ENCODE measurements at regions of chr7 and their contacts with region 1.

Region 1: DNA sequence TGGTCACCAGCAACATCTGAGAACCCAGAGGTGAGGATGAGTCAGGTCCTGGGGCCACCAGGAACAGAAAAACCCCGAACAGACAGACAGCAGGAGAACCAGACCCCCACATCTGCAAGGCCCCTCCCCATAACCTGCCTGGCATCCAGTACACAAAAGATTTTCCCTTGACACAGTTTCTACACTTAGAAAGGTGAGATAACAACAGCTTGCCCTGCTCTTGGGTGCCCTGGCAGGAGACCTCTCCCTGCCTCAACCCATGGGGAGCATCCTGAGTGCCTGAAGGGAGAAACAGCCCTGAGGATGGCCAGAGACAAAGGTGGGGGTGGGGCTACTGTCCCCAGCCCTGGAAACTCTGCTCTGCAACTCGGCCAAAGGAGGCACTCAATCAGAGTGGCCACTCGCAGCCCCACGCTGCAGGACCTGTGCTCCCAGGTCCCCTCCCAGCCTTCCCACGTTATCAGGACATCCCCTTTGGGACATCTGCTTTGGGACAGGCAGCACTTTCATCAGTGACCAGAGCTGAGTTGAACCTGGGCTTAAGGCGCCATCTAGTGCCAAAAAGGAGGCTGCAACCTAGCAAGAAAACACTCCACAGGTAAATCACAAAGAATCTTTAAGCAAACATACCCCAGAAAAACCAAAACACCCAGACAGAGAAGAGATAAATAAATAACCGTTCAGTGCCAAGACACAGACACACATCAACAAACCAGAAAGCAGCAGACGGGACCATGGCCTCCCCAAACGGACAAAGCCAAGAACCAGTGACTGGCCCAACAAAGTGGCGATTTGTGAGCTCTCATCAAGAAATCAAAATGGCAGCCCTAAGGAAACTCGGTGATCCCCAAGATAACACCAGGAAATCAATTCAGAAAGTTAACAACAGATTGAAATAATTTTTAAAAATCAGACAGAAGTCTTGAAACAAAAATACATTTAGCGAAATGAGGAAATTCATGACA is 233.7 kb downstream of the PTPRN2 start:
- DNase-seq: peak; percentile 42
- H3K4me3 ChIP-seq: no peak overlapping the region
- H3K27ac ChIP-seq: no peak overlapping the region
- H3K4me1 ChIP-seq: no peaks in the 10 kb centered on the region
- H3K27me3 ChIP-seq: peaks cover 6% of the 10 kb centered on the region
- CTCF ChIP-seq: peak; percentile 68

Region 2: GRCh38 chr7:157432957-157433576 is 920.8 kb before region 1 on chr7:
- CTCF ChIA-PET with region 1: no interaction called
- POLR2A ChIA-PET with region 1: no interaction called
- intact Hi-C with region 1: loop called (anchors 5 kb)
- DNase-seq: peak; percentile 65
- H3K4me3 ChIP-seq: peak overlapping the region; percentile 15
- H3K27ac ChIP-seq: no peak overlapping the region
- H3K4me1 ChIP-seq: no peaks in the 10 kb centered on the region
- H3K27me3 ChIP-seq: peaks cover 8% of the 10 kb centered on the region
- CTCF ChIP-seq: peak; percentile 86

Region 3: GRCh38 chr7:158228986-158229385 is 124.9 kb before region 1 on chr7:
- CTCF ChIA-PET with region 1: no interaction called
- POLR2A ChIA-PET with region 1: no interaction called
- intact Hi-C with region 1: no loop called
- DNase-seq: no peak
- H3K4me3 ChIP-seq: no peak overlapping the region
- H3K27ac ChIP-seq: no peak overlapping the region
- H3K4me1 ChIP-seq: no peaks in the 10 kb centered on the region
- H3K27me3 ChIP-seq: no peaks in the 10 kb centered on the region
- CTCF ChIP-seq: no peak

Region 4: GRCh38 chr7:158366346-158366745 is 12.5 kb after region 1 on chr7:
- CTCF ChIA-PET with region 1: no interaction called
- POLR2A ChIA-PET with region 1: no interaction called
- intact Hi-C with region 1: no loop called
- DNase-seq: no peak
- H3K4me3 ChIP-seq: no peak overlapping the region
- H3K27ac ChIP-seq: no peak overlapping the region
- H3K4me1 ChIP-seq: no peaks in the 10 kb centered on the region
- H3K27me3 ChIP-seq: no peaks in the 10 kb centered on the region
- CTCF ChIP-seq: no peak

Region 5: DNA sequence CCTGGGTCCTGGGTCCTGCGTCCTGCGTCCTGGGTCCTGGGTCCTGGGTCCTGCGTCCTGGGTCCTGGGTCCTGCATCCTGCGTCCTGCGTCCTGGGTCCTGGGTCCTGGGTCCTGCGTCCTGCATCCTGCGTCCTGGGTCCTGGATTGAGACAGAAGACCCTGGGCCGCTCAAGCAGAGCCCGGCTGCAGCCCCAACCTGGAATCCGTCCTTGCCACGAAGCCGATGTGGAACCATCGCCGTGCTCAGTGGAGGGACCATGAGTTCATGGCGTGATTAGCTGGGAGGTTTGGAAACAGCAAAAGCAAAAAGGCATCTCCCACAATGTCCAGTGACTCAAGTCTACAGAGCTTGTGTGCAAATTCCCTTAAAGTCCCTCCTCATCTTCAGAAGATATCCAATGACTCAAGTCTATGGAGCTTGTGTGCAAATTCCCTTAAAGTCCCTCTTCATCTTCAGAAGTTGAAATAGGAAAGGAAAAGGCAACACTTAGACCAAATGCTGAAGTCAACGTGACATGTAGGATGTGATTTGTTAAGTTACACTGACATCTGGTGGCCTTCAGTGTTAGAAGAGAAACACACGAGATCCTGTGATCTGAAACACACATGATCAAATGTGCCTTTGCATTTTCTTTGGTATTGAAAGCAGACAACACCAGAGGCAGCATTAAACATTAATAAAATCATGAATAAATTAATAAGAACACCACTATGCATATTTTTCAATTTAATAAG is 53.9 kb after region 1 on chr7:
- CTCF ChIA-PET with region 1: no interaction called
- POLR2A ChIA-PET with region 1: no interaction called
- intact Hi-C with region 1: loop called (anchors 2 kb)
- DNase-seq: peak; percentile 15
- H3K4me3 ChIP-seq: no peak overlapping the region
- H3K27ac ChIP-seq: no peak overlapping the region
- H3K4me1 ChIP-seq: no peaks in the 10 kb centered on the region
- H3K27me3 ChIP-seq: no peaks in the 10 kb centered on the region
- CTCF ChIP-seq: peak; percentile 46